Motor neuron (in vitro differentiated cells): ENCODE measurements at regions of chr1 and their contacts with region 1.

Region 1: DNA sequence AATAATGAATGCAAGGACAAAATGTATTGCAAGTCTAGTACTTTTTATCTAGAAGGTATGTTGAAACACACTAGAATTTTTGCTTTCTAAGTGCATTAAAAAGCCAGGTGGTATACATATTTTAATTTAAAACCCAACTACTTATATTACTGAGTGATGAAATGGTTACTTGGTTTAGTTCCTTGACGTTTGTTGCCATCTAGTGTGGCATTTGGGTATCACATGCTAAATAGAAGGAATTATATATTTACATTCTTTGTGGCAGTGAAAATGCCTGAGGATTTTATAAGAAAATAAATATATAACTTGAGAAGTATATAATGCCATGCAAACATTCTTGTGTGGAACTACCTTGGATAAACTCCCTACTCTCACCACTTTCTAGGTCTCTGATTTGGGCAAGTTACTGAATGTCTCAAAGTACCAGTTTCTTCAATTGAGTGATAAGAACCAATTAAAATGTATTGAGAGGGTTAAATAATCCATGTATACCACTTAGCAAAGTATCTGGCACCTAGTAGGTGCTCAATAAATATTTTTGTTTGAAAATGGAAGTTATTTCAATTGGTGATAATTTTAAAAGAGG is 69.6 kb downstream of the SDCCAG8 start:
- ATAC-seq: peak in 3 of 8 experiments; percentile 45 to 72 (median 47)
- H3K4me3 ChIP-seq: no peak overlapping the region
- H3K27ac ChIP-seq: no peak overlapping the region
- H3K4me1 ChIP-seq: no peaks in the 10 kb centered on the region

Region 2: DNA sequence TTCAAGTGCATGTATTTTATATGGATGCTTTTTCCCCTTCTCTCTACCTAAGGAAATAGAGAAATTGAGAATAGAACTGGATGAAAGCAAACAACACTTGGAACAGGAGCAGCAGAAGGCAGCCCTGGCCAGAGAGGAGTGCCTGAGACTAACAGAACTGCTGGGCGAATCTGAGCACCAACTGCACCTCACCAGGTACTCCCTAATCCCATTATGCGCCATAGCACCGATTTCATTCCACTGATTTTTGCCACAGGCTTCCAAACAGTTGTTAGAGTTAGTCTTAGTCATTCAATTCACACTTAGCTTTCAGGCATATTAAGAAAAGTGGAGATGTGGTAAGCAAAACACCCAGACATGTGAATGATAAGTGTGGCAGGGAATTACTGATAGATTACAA is 53.3 kb after region 1 on chr1:
- in situ Hi-C with region 1: no loop called
- ATAC-seq: no peak
- H3K4me3 ChIP-seq: no peak overlapping the region
- H3K27ac ChIP-seq: no peak overlapping the region
- H3K4me1 ChIP-seq: peaks cover 0 to 6% of the 10 kb centered on the region in 2 donors

Region 3: GRCh38 chr1:243686159-243686558 is 360.8 kb after region 1 on chr1:
- in situ Hi-C with region 1: loop called in 1 of 9 experiments (anchors 25 kb)
- ATAC-seq: no peak
- H3K4me3 ChIP-seq: no peak overlapping the region
- H3K27ac ChIP-seq: no peak overlapping the region
- H3K4me1 ChIP-seq: no peaks in the 10 kb centered on the region

Region 4: GRCh38 chr1:243855616-243856318 is 530.4 kb after region 1 on chr1:
- in situ Hi-C with region 1: no loop called
- ATAC-seq: no peak
- H3K4me3 ChIP-seq: no peak overlapping the region
- H3K27ac ChIP-seq: no peak overlapping the region
- H3K4me1 ChIP-seq: peaks cover 4 to 6% of the 10 kb centered on the region in 2 donors

Region 5: DNA sequence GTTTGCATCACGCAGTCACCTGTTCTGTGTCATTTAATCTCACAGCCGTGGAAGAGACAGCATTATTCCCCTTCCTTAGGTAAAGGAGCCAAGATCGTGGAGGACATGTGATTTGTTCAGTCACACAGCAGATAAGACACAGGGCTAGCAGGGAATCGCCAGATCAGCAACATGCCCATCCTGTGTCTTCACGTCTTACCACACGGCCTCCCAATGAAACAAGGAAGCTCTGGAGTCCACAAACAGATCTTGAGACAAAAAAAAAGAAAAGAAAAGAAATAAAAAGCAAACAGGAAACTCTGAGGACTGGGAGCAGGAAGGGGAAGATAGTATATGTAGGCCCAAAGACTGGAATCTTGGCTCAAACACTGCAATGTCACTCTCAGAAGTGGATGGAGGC is 971.0 kb after region 1 on chr1:
- in situ Hi-C with region 1: loop called in 1 of 9 experiments (anchors 25 kb)
- ATAC-seq: no peak
- H3K4me3 ChIP-seq: no peak overlapping the region
- H3K27ac ChIP-seq: no peak overlapping the region
- H3K4me1 ChIP-seq: peaks cover 3 to 7% of the 10 kb centered on the region in 2 donors